Activated CD8-positive, alpha-beta memory T cell treated with anti-CD3 and anti-CD28 coated beads, Interleukin-2, amount 10 ng/mL, durations not matched to agents 7 days and 5 days (primary cell): ENCODE measurements at regions of chr11 and their contacts with region 1.

Region 1: DNA sequence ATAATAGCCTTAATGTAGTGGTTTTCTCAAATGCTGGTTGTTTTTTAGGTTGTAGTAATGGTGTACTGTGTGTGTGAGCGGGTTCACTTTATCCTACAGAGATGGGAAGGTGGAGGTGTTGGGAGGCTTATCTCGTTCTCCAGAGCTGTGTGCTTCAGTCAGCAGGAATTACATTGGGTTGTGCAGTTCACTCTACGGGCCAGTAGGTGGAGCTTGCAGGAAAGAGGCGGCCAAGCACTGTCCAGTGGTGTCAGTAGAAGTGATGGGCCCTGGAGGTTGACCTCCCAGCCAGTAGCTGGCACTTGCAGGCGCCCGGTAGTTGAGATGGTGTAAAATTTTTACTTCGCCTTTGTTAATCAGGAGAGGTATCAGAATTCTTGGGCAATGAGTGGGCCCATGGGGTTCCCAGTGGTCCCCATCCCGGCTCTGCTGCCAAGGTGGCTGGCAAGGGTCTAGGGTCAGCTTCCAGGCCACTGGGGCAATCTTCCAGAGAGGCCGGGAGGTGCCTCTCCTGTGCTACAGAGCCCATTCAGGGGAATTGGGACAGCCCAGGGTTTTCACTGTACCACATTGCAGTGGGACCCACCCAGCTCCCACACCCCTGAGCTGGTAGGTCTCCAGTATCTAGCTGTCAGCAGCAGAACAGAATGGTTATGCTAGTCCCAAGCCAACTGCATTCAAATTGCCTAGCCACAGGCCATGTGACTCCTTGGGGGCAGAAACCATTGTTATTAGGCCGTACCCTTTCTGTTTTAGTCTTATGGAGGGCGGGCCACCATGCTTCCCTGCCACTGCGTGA is 43.9 kb downstream of the BIRC2 start:
- DNase-seq: peak; percentile 73
- ATAC-seq: peak; percentile 83
- H3K4me3 Mint-ChIP-seq: no peak overlapping the region
- H3K27ac Mint-ChIP-seq: peak overlapping the region; percentile 48
- H3K4me1 Mint-ChIP-seq: peaks cover 16% of the 10 kb centered on the region
- H3K27me3 Mint-ChIP-seq: no peaks in the 10 kb centered on the region

Region 2: GRCh38 chr11:102367364-102367763 is 23.5 kb before region 1 on chr11:
- CTCF ChIA-PET with region 1: interaction called, 11 read pairs
- DNase-seq: no peak
- ATAC-seq: peak; percentile 60
- H3K4me3 Mint-ChIP-seq: no peak overlapping the region
- H3K27ac Mint-ChIP-seq: peak overlapping the region; percentile 42
- H3K4me1 Mint-ChIP-seq: peaks cover 19% of the 10 kb centered on the region
- H3K27me3 Mint-ChIP-seq: no peaks in the 10 kb centered on the region

Region 3: DNA sequence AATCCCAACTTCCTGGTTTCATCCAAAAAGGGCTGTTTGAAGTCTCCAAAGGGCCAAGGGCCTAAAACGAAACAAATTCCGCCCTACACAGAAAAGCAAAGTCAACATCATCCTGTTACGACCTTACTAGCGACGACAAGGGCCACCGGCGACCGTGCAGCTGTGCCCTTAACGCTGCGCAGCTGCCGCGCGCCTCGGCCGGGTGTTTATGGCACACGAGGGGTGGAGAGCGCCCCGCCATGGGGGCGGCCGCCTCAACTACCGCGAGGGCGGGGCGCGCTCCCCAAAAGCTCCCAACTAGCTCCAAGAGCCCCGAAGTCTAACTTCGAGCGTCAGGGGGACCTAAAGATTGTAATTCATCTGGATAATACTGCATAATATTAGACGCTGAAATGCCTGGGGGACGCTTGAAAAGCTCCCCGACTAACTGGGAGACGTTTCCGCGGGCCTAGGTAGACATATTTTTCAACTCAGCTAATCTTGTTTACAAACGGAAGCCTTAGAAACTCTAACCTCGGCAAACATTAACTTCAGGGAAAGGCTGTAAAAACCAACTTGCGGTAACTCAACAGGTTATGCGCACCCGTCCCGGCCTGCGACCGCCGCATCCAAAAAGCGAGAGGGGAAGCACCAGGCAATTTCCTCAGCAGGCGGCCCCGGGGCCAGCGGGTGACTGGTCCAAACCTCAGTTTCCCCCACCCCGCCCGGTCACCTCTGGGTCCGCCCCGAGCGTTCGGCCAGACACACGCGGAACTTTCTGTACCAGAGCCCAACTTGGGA is 61.0 kb after region 1 on chr11:
- CTCF ChIA-PET with region 1: interaction called, 12 read pairs
- DNase-seq: peak; percentile 90
- ATAC-seq: peak; percentile 67
- H3K4me3 Mint-ChIP-seq: peak overlapping the region; percentile 87
- H3K27ac Mint-ChIP-seq: peak overlapping the region; percentile 98
- H3K4me1 Mint-ChIP-seq: peaks cover 64% of the 10 kb centered on the region
- H3K27me3 Mint-ChIP-seq: no peaks in the 10 kb centered on the region

Region 4: DNA sequence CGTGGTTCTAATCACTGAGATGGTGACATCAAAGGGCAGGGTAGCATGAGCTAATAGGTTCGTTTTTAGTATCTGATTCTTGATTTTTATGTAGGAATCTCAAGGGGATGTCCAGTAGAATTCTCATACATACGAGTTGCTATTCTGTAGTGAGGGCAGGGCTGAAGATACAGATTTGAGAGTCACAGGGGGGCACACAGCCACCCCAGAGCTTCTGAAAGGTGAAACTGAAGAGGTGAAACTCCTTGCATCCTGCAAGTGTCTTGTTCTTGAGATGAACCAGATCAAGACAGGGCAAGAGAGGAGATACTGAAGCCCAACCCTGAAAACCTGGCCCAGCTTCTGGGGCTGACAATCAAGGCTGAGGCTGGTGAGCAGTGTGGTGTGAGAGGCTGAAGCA is 97.3 kb after region 1 on chr11:
- CTCF ChIA-PET with region 1: interaction called, 16 read pairs
- DNase-seq: no peak
- ATAC-seq: no peak
- H3K4me3 Mint-ChIP-seq: no peak overlapping the region
- H3K27ac Mint-ChIP-seq: no peak overlapping the region
- H3K4me1 Mint-ChIP-seq: peaks cover 20% of the 10 kb centered on the region
- H3K27me3 Mint-ChIP-seq: peaks cover 5% of the 10 kb centered on the region

Region 5: GRCh38 chr11:102614485-102614884 is 223.6 kb after region 1 on chr11:
- CTCF ChIA-PET with region 1: interaction called, 18 read pairs
- DNase-seq: no peak
- ATAC-seq: no peak
- H3K4me3 Mint-ChIP-seq: no peak overlapping the region
- H3K27ac Mint-ChIP-seq: no peak overlapping the region
- H3K4me1 Mint-ChIP-seq: peaks cover 11% of the 10 kb centered on the region
- H3K27me3 Mint-ChIP-seq: no peaks in the 10 kb centered on the region

Region 6: DNA sequence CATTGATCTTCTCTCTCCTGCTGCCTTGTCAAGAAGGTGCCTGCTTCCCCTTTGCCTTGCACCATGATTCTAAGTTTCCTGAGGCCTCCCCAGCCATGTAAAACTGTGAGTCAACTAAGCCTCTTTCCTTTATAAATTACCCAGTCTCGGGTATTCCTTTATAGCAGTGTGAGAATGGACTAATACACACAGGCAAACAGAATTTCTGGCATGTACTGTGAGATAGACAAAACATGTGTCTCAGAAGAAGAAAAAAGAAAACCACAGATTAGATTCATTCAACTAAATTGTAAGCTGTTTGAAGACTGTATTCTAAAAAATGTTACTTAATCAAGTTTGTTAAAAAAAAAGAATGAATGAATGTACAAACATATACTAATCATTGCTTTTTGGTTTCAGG is 235.8 kb after region 1 on chr11:
- CTCF ChIA-PET with region 1: no interaction called
- DNase-seq: no peak
- ATAC-seq: no peak
- H3K4me3 Mint-ChIP-seq: no peak overlapping the region
- H3K27ac Mint-ChIP-seq: no peak overlapping the region
- H3K4me1 Mint-ChIP-seq: no peaks in the 10 kb centered on the region
- H3K27me3 Mint-ChIP-seq: peaks cover 16% of the 10 kb centered on the region